WTC11 (cell line): ENCODE measurements at regions of chr10 and their contacts with region 1.

Region 1: DNA sequence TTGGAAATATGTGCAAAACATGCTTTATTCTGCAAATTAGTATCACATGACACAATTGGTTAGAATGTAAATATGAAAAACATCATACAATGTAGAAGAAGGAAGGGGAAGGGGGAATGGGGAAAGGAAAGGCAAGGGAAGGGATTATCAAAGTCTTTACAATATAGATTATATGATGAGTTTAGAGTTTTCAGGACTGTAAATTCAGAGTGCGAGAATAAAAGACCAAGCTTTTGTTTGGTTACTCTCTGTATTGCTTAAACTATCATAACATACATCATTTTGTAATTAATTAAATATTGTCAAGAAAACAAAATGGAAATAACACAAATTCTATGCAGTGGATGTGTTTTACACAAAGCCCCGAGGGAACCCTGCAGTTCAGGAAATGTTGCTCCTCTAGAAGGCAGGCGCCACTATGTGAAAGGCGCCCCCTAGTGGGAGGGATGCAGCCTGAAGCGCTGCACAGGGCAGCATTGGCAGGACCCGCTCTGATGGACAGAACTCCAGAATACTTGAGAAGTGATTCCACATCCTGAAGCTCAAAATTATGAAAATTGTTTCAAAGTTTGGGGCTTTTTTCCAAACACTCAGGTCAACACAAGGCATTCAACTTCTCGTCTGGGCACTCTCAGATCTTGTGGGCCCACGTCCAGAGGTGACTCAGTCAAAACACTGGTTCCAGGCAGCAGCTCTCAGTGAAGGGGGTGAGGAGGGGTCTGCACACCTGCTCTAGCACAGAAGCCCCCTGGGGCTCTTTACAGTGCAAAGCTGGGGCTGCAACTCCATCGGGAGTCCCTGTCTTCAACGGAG is 31.6 kb upstream of the TMEM254 start:
- DNase-seq: peak; percentile 85
- ATAC-seq: peak; percentile 95
- H3K4me3 Mint-ChIP-seq: no peak overlapping the region
- H3K27ac Mint-ChIP-seq: no peak overlapping the region
- H3K4me1 Mint-ChIP-seq: peaks cover 6% of the 10 kb centered on the region; the same call in 1 of the 2 replicates
- H3K27me3 Mint-ChIP-seq: peaks cover 10% of the 10 kb centered on the region
- CTCF ChIP-seq: peak; percentile 87

Region 2: DNA sequence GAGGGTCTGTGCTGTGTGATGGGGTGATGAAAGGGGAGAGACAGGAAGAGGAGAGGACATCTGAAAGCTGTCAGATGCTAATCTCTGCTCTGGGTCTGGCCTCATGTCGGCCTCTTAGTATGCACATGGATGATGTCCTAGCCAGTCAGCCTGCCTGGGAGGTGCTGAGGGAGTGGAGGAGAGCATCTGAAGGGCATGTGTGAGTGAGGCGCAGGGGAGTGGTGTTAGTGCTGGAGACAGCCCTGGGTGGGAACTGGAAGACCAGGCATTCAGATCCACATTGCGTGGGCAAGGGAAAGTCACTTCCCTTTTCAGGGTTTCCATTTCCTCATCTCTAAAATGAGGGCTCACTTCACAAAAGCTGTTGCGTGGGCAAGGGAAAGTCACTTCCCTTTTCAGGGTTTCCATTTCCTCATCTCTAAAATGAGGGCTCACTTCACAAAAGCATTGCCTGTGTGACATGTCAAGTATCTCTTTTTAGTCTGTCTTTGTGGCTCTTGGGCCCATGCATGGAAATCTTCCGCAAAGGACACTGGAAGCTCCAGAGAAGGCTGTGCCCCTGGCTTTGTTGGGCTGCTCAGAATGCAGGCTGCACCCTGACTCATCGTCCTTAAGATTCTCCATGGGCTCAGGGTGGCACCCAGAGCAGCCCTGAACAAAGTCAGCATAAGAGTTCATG is 108.0 kb before region 1 on chr10:
- CTCF ChIA-PET with region 1: no interaction called
- POLR2A ChIA-PET with region 1: no interaction called
- DNase-seq: no peak
- ATAC-seq: no peak
- H3K4me3 Mint-ChIP-seq: no peak overlapping the region
- H3K27ac Mint-ChIP-seq: no peak overlapping the region
- H3K4me1 Mint-ChIP-seq: no peaks in the 10 kb centered on the region
- H3K27me3 Mint-ChIP-seq: peaks cover 6% of the 10 kb centered on the region
- CTCF ChIP-seq: no peak

Region 3: DNA sequence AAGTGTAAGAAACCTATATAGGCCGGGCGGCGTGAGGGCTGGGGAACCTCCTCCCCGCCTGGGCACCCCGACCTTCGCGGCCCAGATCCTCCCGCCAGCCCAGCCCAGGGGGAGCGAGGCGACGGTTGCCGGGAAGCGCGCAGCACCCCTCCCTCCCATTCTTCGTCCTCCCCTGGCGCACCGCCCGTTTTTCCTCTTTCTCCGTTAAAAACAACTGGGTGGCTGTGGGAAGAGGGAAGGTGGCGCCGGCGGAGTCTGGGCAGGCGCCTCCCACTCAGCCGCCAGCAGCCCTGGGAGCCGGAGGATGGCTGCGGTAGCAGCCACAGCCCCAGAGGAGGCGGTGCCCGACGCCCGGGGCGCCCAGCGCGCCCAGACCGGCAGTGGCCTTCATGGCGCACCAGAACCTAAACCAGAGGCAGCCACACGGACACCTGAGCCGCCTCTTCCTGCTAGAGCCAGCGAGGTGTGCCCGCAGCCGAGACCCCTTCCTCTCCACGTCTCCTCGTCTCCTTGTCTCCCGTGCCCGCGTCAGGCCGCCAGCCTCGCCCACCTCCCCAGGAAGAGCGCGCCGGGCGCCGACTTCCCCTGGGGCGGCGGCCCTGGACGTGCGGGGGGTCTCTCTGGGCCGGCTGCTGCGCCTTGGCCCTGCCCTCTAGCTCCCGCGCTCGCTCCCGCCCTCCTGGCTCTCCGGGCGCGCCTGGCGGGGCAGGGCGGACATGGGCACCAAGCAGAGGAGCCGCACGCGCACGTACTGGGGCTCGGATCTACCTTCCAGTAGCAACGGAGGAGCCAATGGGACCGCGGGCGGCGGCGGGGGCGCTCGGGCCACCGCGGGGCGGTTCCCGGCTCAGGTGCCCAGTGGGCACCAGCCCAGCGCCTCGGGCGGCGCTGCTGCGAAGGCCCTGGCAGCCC is 65.1 kb before region 1 on chr10:
- CTCF ChIA-PET with region 1: no interaction called
- POLR2A ChIA-PET with region 1: no interaction called
- DNase-seq: peak; percentile 66
- ATAC-seq: peak; percentile 82
- H3K4me3 Mint-ChIP-seq: peak overlapping the region; percentile 72
- H3K27ac Mint-ChIP-seq: no peak overlapping the region
- H3K4me1 Mint-ChIP-seq: peaks cover 25% of the 10 kb centered on the region
- H3K27me3 Mint-ChIP-seq: peaks cover 56% of the 10 kb centered on the region
- CTCF ChIP-seq: no peak

Region 4: GRCh38 chr10:80025281-80025680 is 21.6 kb before region 1 on chr10:
- CTCF ChIA-PET with region 1: interaction called, 11 read pairs
- POLR2A ChIA-PET with region 1: no interaction called
- DNase-seq: no peak
- ATAC-seq: no peak
- H3K4me3 Mint-ChIP-seq: no peak overlapping the region
- H3K27ac Mint-ChIP-seq: no peak overlapping the region
- H3K4me1 Mint-ChIP-seq: no peaks in the 10 kb centered on the region
- H3K27me3 Mint-ChIP-seq: no peaks in the 10 kb centered on the region; the same call in 1 of the 2 replicates
- CTCF ChIP-seq: no peak

Region 5: DNA sequence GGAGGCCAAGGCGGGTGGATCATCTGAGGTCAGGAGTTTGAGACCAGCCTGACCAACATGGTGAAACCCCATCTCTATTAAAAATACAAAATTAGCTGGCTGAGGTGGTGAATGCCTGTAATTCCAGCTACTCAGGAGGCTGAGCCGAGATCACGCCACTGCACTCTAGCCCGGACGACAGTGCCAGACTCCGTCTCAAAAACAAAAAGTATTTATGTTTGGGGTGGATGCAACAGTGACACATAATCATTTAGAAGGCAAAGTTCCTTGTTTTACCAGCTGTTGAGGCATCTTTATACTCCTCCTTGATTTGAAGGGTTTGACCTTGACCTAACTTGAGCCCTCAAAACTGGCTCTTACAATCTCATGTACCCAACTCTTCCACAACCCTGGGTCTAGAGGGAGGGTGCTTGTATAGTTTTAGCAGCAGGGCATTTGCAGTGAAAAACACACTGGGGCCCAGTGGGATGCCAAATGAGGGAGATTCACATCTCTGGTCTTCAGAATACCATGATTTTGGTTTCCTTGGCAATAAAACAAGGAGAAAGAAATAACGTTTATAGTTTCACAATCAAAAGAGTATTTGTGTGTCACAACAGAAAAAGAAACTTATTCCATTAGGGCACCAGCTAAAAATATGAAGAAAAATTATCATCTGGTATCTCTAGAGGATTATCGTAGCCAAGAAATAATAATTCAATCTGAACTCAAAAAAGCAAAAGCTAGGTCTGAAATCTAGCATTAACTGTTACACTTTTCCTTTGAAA is 17.5 kb after region 1 on chr10:
- CTCF ChIA-PET with region 1: interaction called, 16 read pairs
- POLR2A ChIA-PET with region 1: no interaction called
- DNase-seq: no peak
- ATAC-seq: no peak
- H3K4me3 Mint-ChIP-seq: no peak overlapping the region
- H3K27ac Mint-ChIP-seq: no peak overlapping the region
- H3K4me1 Mint-ChIP-seq: no peaks in the 10 kb centered on the region
- H3K27me3 Mint-ChIP-seq: peaks cover 4% of the 10 kb centered on the region
- CTCF ChIP-seq: no peak

Region 6: DNA sequence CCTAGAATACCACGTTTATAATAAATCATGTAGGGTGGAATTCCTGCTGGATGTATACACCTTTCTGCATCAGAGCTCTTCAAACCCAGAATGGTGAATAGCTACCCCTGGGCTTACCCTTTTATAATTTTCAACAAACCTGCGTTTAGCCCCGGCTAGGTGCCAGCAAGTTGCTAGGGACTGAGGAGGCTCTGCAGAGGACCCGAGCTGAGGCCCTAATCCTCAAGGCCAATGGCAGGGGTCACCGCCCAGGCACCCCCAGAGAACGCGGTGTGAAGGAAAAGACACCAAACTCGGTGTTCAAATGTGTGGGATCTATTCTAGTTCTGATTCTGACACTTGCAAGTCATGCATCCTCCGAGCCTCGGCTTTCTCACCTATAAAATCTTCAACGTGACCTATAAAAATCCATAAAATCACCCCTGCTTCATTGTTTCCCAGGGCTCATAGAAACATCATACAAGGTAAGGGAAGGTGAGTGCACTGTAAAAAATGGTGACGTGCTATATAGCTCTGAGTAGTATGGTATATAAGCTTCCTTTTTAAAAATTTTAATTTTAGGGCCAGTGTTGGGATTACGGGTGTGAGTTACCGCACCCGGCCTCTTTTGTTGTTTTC is 161.0 kb after region 1 on chr10:
- CTCF ChIA-PET with region 1: no interaction called
- POLR2A ChIA-PET with region 1: no interaction called
- DNase-seq: no peak
- ATAC-seq: 0 out of 2 replicates have a peak, but pooled peaks have one; percentile 1
- H3K4me3 Mint-ChIP-seq: peak overlapping the region; percentile 53
- H3K27ac Mint-ChIP-seq: no peak overlapping the region
- H3K4me1 Mint-ChIP-seq: peaks cover 41% of the 10 kb centered on the region
- H3K27me3 Mint-ChIP-seq: peaks cover 17% of the 10 kb centered on the region
- CTCF ChIP-seq: no peak